Activated naive CD4-positive, alpha-beta T cell treated with anti-CD3 and anti-CD28 coated beads, Interleukin-2, amount 10 ng/mL, durations not matched to agents 7 days and 5 days (primary cell): ENCODE measurements at regions of chr13 and their contacts with region 1.

Region 1: DNA sequence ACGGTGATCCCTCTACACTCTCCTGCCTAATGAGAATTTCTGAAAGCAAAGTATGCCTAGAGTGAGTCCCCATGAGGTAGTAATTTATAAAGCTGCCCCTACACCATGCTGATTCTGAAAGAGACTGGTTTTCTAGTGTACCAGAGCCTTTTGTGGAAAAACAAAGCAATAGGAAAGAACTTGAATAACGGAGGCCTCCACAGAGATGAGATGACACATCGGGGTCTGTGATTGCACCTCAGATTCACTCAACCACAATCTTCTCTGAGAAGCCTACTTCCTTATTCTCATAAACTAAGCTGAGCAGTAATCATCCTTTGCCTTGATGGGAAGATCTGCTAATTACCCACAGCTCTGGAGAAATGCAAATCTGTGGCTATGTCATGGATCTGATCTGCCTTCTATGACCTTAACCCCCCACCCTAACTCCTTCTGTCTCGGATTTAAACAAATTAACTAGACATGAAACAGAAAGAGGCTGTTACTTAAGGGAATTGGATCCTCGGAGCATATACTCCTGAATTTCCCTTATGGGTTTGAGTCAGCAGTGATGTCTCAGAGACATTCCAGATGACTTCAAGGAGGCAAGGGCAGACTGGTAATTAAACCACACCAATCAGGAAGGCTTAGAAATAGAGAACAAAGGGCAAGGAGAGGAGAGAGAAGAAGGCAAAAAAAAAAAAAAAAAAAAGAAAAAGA is 128.0 kb downstream of the DCT start:
- DNase-seq: no peak
- H3K4me3 Mint-ChIP-seq: no peak overlapping the region
- H3K27ac Mint-ChIP-seq: no peak overlapping the region
- H3K4me1 Mint-ChIP-seq: peaks cover 6% of the 10 kb centered on the region
- H3K27me3 Mint-ChIP-seq: peaks cover 4% of the 10 kb centered on the region

Region 2: GRCh38 chr13:94362411-94362909 is 11.0 kb after region 1 on chr13:
- CTCF ChIA-PET with region 1: interaction called, 14 read pairs
- DNase-seq: peak; percentile 74
- H3K4me3 Mint-ChIP-seq: no peak overlapping the region
- H3K27ac Mint-ChIP-seq: no peak overlapping the region
- H3K4me1 Mint-ChIP-seq: no peaks in the 10 kb centered on the region
- H3K27me3 Mint-ChIP-seq: peaks cover 4% of the 10 kb centered on the region